WTC11 (cell line): ENCODE measurements at regions of chr5 and their contacts with region 1.

Region 1: DNA sequence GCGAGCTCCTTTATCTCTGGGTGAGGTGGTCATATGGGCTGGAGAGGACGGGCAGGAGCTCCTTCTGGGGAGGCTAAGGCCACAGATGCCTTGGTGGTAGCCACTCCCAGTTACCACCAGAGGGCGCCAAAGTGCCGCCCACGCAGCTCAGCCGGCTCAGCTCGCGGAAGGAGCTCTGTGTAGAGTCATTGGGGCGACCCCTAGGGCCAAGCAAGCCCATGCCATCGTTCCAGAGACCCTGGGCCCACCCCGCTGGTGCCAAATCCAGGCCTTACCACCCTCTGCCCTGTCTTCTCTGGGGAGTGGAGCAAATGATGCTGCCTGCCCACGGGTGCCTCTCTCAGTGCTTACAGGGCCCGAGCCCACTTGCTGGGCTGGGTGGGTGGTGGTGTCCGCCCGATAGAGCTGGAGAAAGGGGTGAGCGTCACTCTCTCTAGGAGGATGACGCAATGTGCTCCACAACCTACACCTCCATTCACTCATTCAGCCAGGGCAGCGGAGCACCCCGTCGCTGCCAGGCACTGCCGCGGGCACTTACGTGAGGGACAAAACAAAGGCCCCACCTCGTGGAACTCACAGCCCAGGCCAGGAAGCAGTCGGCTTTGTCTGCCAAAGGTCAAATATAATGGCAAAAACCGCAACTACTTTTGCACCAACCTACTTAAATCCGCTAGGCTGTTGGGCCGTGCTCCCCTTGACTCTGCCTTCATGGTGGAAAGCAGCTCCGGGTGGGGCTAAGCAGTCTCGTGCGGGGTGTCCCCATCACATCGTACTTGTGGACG is 13.8 kb downstream of the TSPAN17 start:
- DNase-seq: peak; percentile 89
- ATAC-seq: peak; percentile 83
- H3K4me3 Mint-ChIP-seq: no peak overlapping the region
- H3K27ac Mint-ChIP-seq: no peak overlapping the region
- H3K4me1 Mint-ChIP-seq: peaks cover 11% of the 10 kb centered on the region
- H3K27me3 Mint-ChIP-seq: no peaks in the 10 kb centered on the region
- CTCF ChIP-seq: peak; percentile 98

Region 2: GRCh38 chr5:176716320-176716719 is 55.3 kb after region 1 on chr5:
- CTCF ChIA-PET with region 1: interaction called, 34 read pairs
- POLR2A ChIA-PET with region 1: no interaction called
- DNase-seq: no peak
- ATAC-seq: no peak
- H3K4me3 Mint-ChIP-seq: no peak overlapping the region
- H3K27ac Mint-ChIP-seq: 0 out of 2 replicates have a peak overlapping the region, but pooled peaks have one; percentile 68
- H3K4me1 Mint-ChIP-seq: peaks cover 25% of the 10 kb centered on the region
- H3K27me3 Mint-ChIP-seq: peaks cover 8% of the 10 kb centered on the region
- CTCF ChIP-seq: no peak

Region 3: GRCh38 chr5:176774216-176775170 is 113.4 kb after region 1 on chr5:
- CTCF ChIA-PET with region 1: interaction called, 16 read pairs
- POLR2A ChIA-PET with region 1: no interaction called
- DNase-seq: no peak
- ATAC-seq: peak; percentile 82
- H3K4me3 Mint-ChIP-seq: no peak overlapping the region
- H3K27ac Mint-ChIP-seq: no peak overlapping the region
- H3K4me1 Mint-ChIP-seq: peaks cover 24% of the 10 kb centered on the region
- H3K27me3 Mint-ChIP-seq: peaks cover 2% of the 10 kb centered on the region; the same call in 1 of the 2 replicates
- CTCF ChIP-seq: no peak

Region 4: DNA sequence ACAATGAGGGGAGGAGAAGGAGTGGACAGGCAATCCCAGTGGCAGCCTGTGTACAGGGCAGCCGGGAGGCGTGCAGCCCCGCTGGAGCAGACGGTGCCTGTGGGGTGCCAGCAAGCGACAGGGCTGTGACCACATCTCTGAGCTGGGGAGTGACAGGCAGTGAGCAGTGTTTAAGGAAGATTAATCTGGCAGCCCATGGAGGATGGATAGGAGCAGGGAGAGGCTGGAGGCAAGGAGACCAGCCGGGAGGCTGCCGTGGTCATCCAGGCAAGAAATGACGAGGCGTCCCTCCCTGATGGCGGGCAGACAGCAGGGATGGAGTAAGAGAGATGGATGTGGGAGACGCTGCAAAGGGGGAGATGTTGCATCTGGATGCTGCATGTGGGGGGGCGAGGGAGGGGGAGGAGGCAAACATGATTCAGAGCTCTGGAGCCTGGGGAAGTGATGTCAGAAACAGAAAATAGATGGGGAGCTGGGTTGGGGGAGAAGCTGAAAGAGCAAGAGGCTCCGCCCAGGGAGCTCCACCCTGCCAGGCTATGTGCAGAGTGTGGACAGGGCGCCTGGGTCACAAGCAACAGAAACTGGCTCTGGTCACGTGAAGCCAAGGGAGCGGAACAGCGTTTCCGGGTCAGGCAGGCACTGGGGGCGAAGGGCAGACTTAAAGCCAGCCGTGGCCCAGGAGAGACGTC is 161.9 kb after region 1 on chr5:
- CTCF ChIA-PET with region 1: interaction called, 62 read pairs
- POLR2A ChIA-PET with region 1: no interaction called
- DNase-seq: no peak
- ATAC-seq: no peak
- H3K4me3 Mint-ChIP-seq: no peak overlapping the region
- H3K27ac Mint-ChIP-seq: no peak overlapping the region
- H3K4me1 Mint-ChIP-seq: peaks cover 17% of the 10 kb centered on the region
- H3K27me3 Mint-ChIP-seq: peaks cover 3% of the 10 kb centered on the region
- CTCF ChIP-seq: no peak

Region 5: GRCh38 chr5:176883700-176884570 is 222.9 kb after region 1 on chr5:
- CTCF ChIA-PET with region 1: interaction called, 12 read pairs
- POLR2A ChIA-PET with region 1: no interaction called
- DNase-seq: no peak
- ATAC-seq: no peak
- H3K4me3 Mint-ChIP-seq: no peak overlapping the region
- H3K27ac Mint-ChIP-seq: no peak overlapping the region
- H3K4me1 Mint-ChIP-seq: no peaks in the 10 kb centered on the region
- H3K27me3 Mint-ChIP-seq: no peaks in the 10 kb centered on the region
- CTCF ChIP-seq: no peak

Region 6: DNA sequence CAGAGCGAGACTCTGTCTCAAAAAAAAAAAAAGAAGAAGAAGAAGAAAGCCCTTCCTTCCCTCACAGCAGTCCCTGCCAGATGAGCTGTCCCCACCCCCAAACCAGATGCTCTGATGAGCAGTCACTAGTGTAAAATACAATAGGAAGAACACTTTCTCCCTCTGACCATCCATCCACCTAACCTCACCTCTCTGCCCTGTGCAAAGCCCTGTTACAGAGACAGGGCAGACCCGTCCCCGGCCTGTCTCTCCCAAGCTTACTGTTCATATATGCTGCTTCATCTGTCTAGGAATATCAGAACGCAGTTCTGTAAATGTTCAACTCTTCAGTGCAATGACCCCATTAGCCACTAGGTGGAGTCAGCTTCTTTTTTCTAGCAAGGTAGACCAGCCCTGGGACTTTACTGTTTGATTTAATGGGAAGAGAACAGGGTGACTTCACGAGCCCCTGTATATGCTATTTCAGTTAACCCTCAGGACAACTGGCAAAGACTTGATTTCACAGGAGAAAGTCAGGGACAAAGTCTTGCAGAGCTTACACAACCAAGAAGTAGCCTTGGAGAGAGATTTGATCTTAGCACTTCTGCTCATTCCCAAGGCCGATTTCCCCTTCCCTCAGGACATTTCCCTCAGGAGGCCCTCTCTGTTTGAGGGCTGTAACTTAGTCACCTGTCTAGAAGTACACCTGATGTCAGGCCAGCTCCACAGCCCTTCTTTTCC is 410.8 kb after region 1 on chr5:
- CTCF ChIA-PET with region 1: interaction called, 14 read pairs
- POLR2A ChIA-PET with region 1: no interaction called
- DNase-seq: peak; percentile 76
- ATAC-seq: peak; percentile 91
- H3K4me3 Mint-ChIP-seq: peak overlapping the region; percentile 8
- H3K27ac Mint-ChIP-seq: peak overlapping the region; percentile 22
- H3K4me1 Mint-ChIP-seq: peaks cover 3% of the 10 kb centered on the region
- H3K27me3 Mint-ChIP-seq: no peaks in the 10 kb centered on the region; the same call in 1 of the 2 replicates
- CTCF ChIP-seq: peak; percentile 88